Endothelial cell of umbilical vein (primary cell): ENCODE measurements at regions of chr17 and their contacts with region 1.

Region 1: DNA sequence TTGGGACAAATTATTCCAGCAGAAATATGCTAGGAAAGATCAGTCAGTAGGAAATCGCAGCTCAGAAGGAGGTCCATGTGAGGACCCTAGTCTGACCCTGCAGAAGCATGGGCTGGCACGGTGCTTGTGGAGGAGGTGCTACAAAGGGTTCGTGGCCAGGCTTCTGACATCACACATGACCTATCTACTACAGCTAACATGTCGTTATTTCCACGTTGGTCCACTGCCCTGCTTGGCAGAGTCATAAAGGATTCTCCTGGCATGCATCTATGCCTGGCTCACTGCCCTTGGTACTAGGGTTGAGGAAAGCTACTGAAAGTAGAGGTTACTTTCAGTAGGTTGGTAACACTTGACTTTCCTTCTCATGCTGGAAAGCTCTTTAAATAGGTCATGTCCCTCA is 118.1 kb upstream of the SHISA6 start:
- DNase-seq: no peak
- H3K4me3 ChIP-seq: no peak overlapping the region
- H3K27ac ChIP-seq: no peak overlapping the region
- H3K4me1 ChIP-seq: no peaks in the 10 kb centered on the region
- H3K27me3 ChIP-seq: no peaks in the 10 kb centered on the region
- CTCF ChIP-seq: no peak
- POLR2A ChIP-seq: no peak

Region 2: GRCh38 chr17:11109106-11109505 is 13.8 kb before region 1 on chr17:
- CTCF ChIA-PET with region 1: no interaction called
- POLR2A ChIA-PET with region 1: no interaction called
- dilution Hi-C with region 1: no loop called
- intact Hi-C with region 1: loop called (anchors 1 kb)
- DNase-seq: no peak
- H3K4me3 ChIP-seq: no peak overlapping the region
- H3K27ac ChIP-seq: no peak overlapping the region
- H3K4me1 ChIP-seq: no peaks in the 10 kb centered on the region
- H3K27me3 ChIP-seq: no peaks in the 10 kb centered on the region
- CTCF ChIP-seq: no peak
- POLR2A ChIP-seq: no peak